B cell (primary cell): ENCODE measurements at regions of chr10 and their contacts with region 1.

Region 1: GRCh38 chr10:17257466-17258321 is 29.7 kb downstream of the VIM start:
- DNase-seq: peak; percentile 74
- ATAC-seq: peak; percentile 64
- H3K4me3 ChIP-seq: no peak overlapping the region
- H3K4me3 Mint-ChIP-seq: no peak overlapping the region
- H3K27ac ChIP-seq: no peak overlapping the region
- H3K27ac Mint-ChIP-seq: no peak overlapping the region
- H3K4me1 ChIP-seq: peaks cover 0 to 3% of the 10 kb centered on the region in 2 donors
- H3K4me1 Mint-ChIP-seq: peaks cover 4% of the 10 kb centered on the region
- H3K27me3 ChIP-seq: no peaks in the 10 kb centered on the region
- H3K27me3 Mint-ChIP-seq: peaks cover 10% of the 10 kb centered on the region
- CTCF ChIP-seq: peak; percentile 90

Region 2: DNA sequence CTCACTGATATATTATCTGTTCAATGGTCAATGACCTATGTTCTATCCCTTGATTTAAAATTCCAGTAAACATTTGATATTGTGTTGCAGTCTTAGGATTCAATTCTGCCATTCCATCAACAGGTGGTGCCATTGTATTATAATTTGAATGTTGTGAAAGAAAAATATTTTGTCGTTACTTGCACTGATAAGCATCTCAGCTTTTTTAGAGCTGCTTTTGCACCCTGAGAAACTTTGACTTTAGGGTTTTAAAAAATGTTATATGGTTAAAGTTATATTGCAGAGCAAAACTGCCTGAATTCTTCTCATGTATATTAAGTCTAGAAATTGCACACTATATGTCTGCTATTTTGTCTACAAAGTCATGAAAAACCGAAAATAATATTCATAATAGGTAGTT is 1378.6 kb before region 1 on chr10:
- CTCF ChIA-PET with region 1: no interaction called
- POLR2A ChIA-PET with region 1: no interaction called
- intact Hi-C with region 1: loop called (anchors 2 kb)
- DNase-seq: peak; percentile 26
- ATAC-seq: no peak
- H3K4me3 ChIP-seq: no peak overlapping the region
- H3K4me3 Mint-ChIP-seq: no peak overlapping the region
- H3K27ac ChIP-seq: no peak overlapping the region
- H3K27ac Mint-ChIP-seq: no peak overlapping the region
- H3K4me1 ChIP-seq: no peaks in the 10 kb centered on the region
- H3K4me1 Mint-ChIP-seq: no peaks in the 10 kb centered on the region
- H3K27me3 ChIP-seq: peaks cover 0 to 15% (median 6%) of the 10 kb centered on the region in 4 experiments
- H3K27me3 Mint-ChIP-seq: peaks cover 55% of the 10 kb centered on the region
- CTCF ChIP-seq: peak; percentile 62

Region 3: DNA sequence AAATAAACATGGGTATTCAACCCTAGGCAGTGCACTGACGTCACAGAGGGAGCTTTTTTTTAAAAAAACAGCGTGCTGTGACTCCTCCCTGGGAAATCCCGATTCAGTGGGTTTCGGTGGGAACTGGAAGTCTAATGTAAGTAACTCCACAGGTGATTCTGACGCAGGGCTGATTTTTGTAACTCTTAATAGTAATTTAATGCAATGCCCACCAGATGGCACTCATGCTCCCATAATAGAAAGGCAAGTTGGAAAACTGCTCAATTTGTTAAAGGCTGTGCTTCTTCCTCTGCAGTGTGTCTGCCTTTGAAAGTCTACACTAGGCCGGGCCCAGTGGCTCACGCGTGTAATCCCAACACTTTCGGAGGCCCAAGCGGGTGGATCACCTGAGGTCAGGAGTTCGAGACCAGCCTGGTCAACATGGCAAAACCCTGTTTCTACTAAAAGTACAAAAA is 429.6 kb before region 1 on chr10:
- CTCF ChIA-PET with region 1: interaction called, 10 read pairs
- POLR2A ChIA-PET with region 1: no interaction called
- intact Hi-C with region 1: loop called (anchors 1 kb)
- DNase-seq: peak; percentile 81
- ATAC-seq: peak; percentile 86
- H3K4me3 ChIP-seq: no peak overlapping the region
- H3K4me3 Mint-ChIP-seq: no peak overlapping the region
- H3K27ac ChIP-seq: no peak overlapping the region
- H3K27ac Mint-ChIP-seq: no peak overlapping the region
- H3K4me1 ChIP-seq: peaks cover 0 to 4% of the 10 kb centered on the region in 2 donors
- H3K4me1 Mint-ChIP-seq: peaks cover 6% of the 10 kb centered on the region
- H3K27me3 ChIP-seq: peaks cover 0 to 5% (median 0%) of the 10 kb centered on the region in 4 experiments
- H3K27me3 Mint-ChIP-seq: peaks cover 4% of the 10 kb centered on the region
- CTCF ChIP-seq: peak; percentile 74

Region 4: DNA sequence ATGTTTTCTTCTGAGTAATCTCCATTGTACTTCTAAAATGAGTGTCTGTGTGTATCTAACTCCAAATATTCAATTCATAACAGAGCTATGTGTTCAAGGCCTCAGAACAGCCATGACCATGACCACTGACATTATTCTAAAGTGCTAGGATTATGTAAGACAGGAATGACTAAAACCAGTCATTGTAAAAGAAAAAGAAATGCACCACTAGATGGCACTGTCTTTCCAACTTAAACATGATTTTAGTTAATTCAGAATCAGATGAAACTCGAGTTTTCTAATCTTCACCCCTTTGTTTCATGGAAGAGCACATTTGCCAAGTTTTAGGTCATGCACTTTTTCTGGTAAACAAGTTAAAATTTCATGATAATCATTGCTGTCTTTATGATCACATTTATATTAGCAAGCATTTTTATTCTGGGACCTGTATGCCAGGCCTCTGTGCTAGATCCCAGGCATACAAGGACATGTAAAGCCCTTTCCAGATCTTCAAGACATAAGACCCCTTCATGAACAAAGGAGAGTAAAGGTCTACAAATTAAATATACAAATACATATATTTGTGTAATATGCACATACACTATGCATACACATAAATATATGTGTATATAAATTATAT is 414.3 kb before region 1 on chr10:
- CTCF ChIA-PET with region 1: interaction called, 72 read pairs
- POLR2A ChIA-PET with region 1: no interaction called
- intact Hi-C with region 1: loop called (anchors 1 kb)
- DNase-seq: peak; percentile 73
- ATAC-seq: peak; percentile 21
- H3K4me3 ChIP-seq: no peak overlapping the region
- H3K4me3 Mint-ChIP-seq: no peak overlapping the region
- H3K27ac ChIP-seq: no peak overlapping the region
- H3K27ac Mint-ChIP-seq: no peak overlapping the region
- H3K4me1 ChIP-seq: no peaks in the 10 kb centered on the region
- H3K4me1 Mint-ChIP-seq: no peaks in the 10 kb centered on the region
- H3K27me3 ChIP-seq: no peaks in the 10 kb centered on the region
- H3K27me3 Mint-ChIP-seq: peaks cover 3% of the 10 kb centered on the region
- CTCF ChIP-seq: peak; percentile 87

Region 5: DNA sequence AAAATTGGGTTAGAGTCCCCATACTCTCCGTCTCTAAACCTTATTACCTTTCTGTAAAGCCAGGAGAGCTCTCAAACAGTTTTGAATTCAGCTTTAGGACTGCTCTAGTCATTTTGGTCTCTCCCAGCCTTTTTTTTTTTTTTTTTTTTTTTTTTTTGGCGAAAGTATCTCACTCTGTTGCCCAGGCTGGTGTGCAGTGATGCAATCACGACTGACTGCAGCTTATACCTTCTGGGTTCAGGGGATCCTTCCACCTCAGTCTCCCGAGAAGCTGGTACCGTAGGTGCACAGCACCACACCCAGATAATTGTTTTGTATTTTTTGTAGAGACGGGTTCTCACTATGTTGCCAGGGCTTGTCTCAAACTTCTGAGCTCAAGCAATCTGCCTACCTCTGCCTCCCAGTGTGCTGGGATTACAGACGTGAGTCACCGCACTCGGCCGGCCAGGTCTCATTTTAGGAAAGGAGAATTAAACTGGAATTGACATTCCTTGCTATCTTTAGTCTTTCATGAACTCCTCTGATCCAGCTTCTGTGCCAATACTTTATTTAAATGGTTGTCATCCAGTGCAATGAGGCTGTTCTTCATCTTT is 409.0 kb before region 1 on chr10:
- CTCF ChIA-PET with region 1: interaction called, 72 read pairs
- POLR2A ChIA-PET with region 1: no interaction called
- intact Hi-C with region 1: loop called (anchors 1 kb)
- DNase-seq: no peak
- ATAC-seq: no peak
- H3K4me3 ChIP-seq: no peak overlapping the region
- H3K4me3 Mint-ChIP-seq: no peak overlapping the region
- H3K27ac ChIP-seq: no peak overlapping the region
- H3K27ac Mint-ChIP-seq: no peak overlapping the region
- H3K4me1 ChIP-seq: no peaks in the 10 kb centered on the region
- H3K4me1 Mint-ChIP-seq: no peaks in the 10 kb centered on the region
- H3K27me3 ChIP-seq: no peaks in the 10 kb centered on the region
- H3K27me3 Mint-ChIP-seq: peaks cover 3% of the 10 kb centered on the region
- CTCF ChIP-seq: no peak

Region 6: DNA sequence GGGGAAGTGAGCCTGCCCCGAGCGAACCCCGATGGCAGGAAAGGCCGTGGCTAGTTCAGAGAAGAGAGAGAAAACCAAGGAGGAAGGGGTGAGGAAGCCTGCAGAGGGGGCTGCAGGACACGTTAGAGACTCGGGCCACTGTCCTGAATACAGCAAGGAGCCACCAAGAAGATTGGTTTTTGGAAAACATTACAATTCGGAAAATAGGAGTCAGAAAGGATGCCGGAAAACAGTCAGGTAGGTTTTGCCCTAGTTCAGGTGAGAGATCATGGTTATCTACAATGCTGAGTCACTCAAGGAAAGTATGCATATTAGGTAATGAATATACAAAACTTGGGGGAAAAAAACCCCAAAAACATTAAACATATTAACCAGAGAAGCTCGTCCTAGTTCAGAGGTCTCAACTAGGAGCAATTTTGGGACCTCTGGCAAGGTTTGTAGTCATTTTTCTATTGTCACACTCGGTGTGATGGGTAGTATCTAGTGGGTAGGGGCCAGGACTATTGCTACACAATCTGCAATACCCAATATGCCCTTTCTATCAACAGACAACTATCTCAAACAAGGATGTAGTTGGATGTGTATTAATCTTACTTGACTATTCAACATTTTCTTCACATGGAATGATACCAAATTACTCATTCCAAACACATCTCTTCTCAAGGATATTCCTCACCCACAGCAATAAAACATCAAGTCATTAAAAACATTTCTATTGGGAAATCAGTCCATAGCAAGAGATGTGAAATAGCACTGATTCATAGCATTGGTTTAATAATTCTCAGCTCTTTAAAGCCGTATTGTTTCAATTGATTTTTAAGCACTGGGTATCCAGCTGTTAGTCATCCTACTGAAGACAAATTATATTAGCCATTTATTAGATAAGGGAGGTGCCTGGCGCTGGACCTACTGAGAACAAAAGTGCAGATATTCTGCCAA is 366.1 kb before region 1 on chr10:
- CTCF ChIA-PET with region 1: interaction called, 11 read pairs
- POLR2A ChIA-PET with region 1: no interaction called
- intact Hi-C with region 1: loop called (anchors 1 kb)
- DNase-seq: peak; percentile 40
- ATAC-seq: peak; percentile 66
- H3K4me3 ChIP-seq: peak overlapping the region in 2 of 5 experiments; percentile 21 to 34
- H3K4me3 Mint-ChIP-seq: peak overlapping the region; percentile 67
- H3K27ac ChIP-seq: no peak overlapping the region
- H3K27ac Mint-ChIP-seq: no peak overlapping the region
- H3K4me1 ChIP-seq: peaks cover 5 to 6% of the 10 kb centered on the region in 2 donors
- H3K4me1 Mint-ChIP-seq: peaks cover 10% of the 10 kb centered on the region
- H3K27me3 ChIP-seq: peaks cover 0 to 3% (median 0%) of the 10 kb centered on the region in 4 experiments
- H3K27me3 Mint-ChIP-seq: peaks cover 16% of the 10 kb centered on the region
- CTCF ChIP-seq: peak; percentile 58

Region 7: GRCh38 chr10:17430647-17431355 is 173.1 kb after region 1 on chr10:
- CTCF ChIA-PET with region 1: interaction called, 3 read pairs
- POLR2A ChIA-PET with region 1: no interaction called
- intact Hi-C with region 1: loop called (anchors 2 kb)
- DNase-seq: peak; percentile 60
- ATAC-seq: peak; percentile 47
- H3K4me3 ChIP-seq: no peak overlapping the region
- H3K4me3 Mint-ChIP-seq: peak overlapping the region; percentile 10
- H3K27ac ChIP-seq: no peak overlapping the region
- H3K27ac Mint-ChIP-seq: no peak overlapping the region
- H3K4me1 ChIP-seq: peaks cover 34 to 36% of the 10 kb centered on the region in 2 donors
- H3K4me1 Mint-ChIP-seq: peaks cover 44% of the 10 kb centered on the region
- H3K27me3 ChIP-seq: peaks cover 0 to 18% (median 8%) of the 10 kb centered on the region in 4 experiments
- H3K27me3 Mint-ChIP-seq: peaks cover 34% of the 10 kb centered on the region
- CTCF ChIP-seq: peak; percentile 85